ENCODE measurements at regions of chr20 and their contacts with region 1.

Region 1: DNA sequence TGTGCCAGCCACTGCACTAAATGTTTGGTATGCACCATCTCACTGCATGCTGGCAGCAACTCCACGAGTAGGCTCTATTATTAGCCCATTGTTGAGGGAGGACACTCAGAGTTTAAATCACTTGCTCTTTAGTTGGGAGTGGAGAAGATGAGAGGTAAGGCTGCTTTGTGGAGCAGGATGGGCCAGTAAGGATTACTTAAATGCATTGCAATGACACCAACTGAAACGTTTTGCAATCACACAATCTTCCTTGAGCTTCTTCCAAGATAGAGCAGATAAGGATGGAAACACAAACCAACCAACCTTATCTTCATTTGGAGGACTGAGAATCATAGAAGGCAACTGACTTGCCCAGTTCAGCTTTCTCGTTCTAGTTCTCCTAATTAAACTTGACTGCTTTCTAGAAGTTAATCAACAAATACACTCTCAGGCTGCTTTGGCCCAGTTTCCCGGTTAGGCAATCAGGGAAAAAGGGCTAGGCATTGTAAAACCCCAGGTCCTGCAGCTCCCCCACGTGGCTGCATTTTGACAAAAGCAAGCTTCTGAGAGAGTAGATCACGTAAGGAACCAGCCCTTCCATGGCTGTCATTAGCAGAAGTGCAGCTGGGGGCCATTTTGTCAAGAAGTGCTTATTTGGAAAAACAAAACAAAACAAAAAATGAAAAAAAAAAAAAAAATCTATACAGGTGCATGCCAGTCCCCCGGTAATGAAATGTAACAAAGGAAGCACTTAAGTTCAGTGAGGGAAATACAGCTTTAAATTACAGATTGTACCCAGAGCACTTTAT is 130.6 kb downstream of the BCAS1 start:
- DNase-seq: peak; percentile 99
- H3K4me3 Mint-ChIP-seq: peak overlapping the region; percentile 28
- H3K27ac Mint-ChIP-seq: peak overlapping the region; percentile 68
- H3K4me1 Mint-ChIP-seq: peaks cover 78% of the 10 kb centered on the region
- H3K27me3 Mint-ChIP-seq: no peaks in the 10 kb centered on the region
- CTCF ChIP-seq: peak; percentile 92

Region 2: DNA sequence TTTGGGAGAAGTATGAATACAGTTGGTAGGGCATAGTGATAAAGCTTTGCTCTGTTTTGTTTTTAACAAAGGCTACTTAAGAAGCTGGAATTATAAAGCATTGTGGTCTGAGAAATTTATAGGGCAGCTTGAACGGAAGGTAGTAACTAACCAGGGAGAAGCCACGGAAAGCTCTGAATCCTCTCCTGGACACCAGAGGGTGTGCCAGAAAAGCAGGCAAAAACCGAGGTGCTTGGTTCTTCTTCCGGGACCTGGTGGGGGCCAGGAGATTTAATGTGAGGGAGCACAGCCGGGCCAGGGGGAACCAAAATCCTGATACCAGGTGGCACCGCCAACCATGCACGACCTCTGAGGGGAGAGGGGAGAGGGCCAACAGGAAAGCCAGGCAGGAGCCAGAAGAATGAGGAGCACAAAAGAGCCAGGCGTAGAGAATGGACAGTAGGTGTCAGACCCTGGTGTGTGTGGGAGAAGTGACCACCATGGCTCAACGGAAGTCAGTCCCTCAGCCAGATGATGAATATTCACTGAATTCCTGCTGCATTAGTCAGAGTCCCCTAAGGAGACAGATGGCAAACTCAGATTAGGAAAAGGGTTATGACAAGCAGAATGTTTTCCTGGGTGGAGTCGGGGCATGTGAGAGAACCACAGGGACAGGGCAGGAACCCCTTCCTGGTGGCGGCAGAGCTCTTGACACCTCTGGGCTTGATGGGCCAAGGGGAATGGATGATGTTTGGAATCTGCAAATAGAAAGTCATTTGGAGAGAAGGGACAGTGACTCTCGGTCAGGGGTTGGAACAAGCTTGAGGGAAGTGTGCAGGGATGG is 608.4 kb before region 1 on chr20:
- CTCF ChIA-PET with region 1: no interaction called
- intact Hi-C with region 1: loop called (anchors 10 kb)
- DNase-seq: no peak
- H3K4me3 Mint-ChIP-seq: no peak overlapping the region
- H3K27ac Mint-ChIP-seq: peak overlapping the region; percentile 7
- H3K4me1 Mint-ChIP-seq: peaks cover 16% of the 10 kb centered on the region
- H3K27me3 Mint-ChIP-seq: peaks cover 68% of the 10 kb centered on the region
- CTCF ChIP-seq: no peak

Region 3: DNA sequence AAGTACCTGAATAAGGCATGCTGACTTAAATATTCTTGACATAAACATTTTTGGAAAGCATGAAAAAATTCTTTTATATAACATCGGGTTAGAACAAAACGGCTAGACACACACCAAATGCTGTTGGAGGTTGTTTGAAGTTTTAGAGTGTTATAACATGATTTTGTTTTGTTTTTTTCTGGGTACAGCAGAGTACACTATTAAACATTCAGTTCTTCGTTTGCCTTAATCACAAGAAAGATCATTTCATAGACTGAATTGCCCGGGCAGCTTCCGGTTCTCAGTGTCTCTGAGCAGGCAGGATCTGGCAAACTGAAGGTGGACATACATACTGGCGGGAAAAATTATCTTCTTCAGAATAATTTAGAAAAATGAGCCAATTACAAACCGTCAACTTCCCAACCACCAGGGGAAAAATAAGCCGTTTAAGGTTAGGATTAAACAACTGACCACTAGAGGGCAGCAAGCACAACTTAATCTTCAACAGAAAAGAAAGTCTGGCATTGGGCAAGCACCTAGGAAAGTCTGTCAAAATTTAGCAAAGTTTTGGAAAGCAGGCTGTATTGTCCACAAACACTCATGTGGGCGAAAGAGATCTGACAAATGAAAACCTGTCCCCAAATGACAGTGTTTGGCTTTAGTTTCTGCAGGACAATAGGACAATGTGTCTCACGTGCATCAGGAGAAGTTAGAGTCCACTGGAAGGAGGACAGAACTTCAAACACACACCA is 361.1 kb before region 1 on chr20:
- CTCF ChIA-PET with region 1: interaction called, 14 read pairs
- intact Hi-C with region 1: loop called (anchors 1 kb)
- DNase-seq: peak; percentile 81
- H3K4me3 Mint-ChIP-seq: peak overlapping the region; percentile 63
- H3K27ac Mint-ChIP-seq: peak overlapping the region; percentile 80
- H3K4me1 Mint-ChIP-seq: peaks cover 60% of the 10 kb centered on the region
- H3K27me3 Mint-ChIP-seq: no peaks in the 10 kb centered on the region
- CTCF ChIP-seq: peak; percentile 95

Region 4: GRCh38 chr20:53692413-53693067 is 247.2 kb before region 1 on chr20:
- CTCF ChIA-PET with region 1: interaction called, 13 read pairs
- intact Hi-C with region 1: no loop called
- DNase-seq: no peak
- H3K4me3 Mint-ChIP-seq: no peak overlapping the region
- H3K27ac Mint-ChIP-seq: no peak overlapping the region
- H3K4me1 Mint-ChIP-seq: peaks cover 17% of the 10 kb centered on the region
- H3K27me3 Mint-ChIP-seq: no peaks in the 10 kb centered on the region
- CTCF ChIP-seq: no peak

Region 5: GRCh38 chr20:53828682-53829254 is 111.0 kb before region 1 on chr20:
- CTCF ChIA-PET with region 1: interaction called, 6 read pairs
- intact Hi-C with region 1: loop called (anchors 1 kb)
- DNase-seq: peak; percentile 27
- H3K4me3 Mint-ChIP-seq: peak overlapping the region; percentile 64
- H3K27ac Mint-ChIP-seq: peak overlapping the region; percentile 98
- H3K4me1 Mint-ChIP-seq: peaks cover 55% of the 10 kb centered on the region
- H3K27me3 Mint-ChIP-seq: no peaks in the 10 kb centered on the region
- CTCF ChIP-seq: no peak

Region 6: DNA sequence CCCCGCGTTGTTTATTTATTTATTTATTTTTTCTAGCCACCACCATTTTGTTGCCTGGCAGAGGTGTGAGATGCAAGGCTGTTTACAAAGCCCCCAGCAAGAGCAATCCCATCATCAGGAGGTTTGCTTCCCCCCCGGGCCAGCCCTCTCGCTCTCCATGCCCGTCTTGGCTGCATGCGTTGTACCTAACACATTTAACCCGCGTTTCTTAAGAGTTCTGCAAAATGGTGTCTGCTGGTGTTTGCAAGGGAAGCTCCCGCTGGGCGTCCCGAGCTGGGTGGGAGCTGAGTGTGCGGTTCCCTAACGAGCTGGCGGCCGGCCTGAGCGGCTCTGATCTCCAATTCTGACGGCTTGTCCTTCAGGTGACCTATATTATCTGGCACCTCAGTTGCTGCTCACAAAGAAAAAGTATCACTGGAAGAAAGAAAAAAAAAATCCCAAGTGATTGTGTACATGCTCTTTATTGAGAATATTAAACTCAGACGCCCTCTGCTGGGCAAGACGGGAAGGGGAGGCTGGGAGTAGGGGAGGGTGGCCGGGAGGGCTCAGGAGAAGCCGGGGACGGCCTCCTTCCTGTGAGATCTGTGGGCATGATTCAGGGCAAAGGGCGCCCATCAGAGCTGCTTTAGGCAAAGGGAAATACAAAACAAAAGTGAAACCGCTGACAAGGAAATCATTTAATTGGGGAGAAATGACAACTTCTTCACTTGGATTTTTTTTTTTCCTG is 24.2 kb before region 1 on chr20:
- CTCF ChIA-PET with region 1: interaction called, 51 read pairs
- intact Hi-C with region 1: loop called (anchors 1 kb)
- DNase-seq: peak; percentile 99
- H3K4me3 Mint-ChIP-seq: peak overlapping the region; percentile 71
- H3K27ac Mint-ChIP-seq: peak overlapping the region; percentile 90
- H3K4me1 Mint-ChIP-seq: peaks cover 50% of the 10 kb centered on the region
- H3K27me3 Mint-ChIP-seq: no peaks in the 10 kb centered on the region
- CTCF ChIP-seq: peak; percentile 91

Region 7: GRCh38 chr20:53984356-53985149 is 44.8 kb after region 1 on chr20:
- CTCF ChIA-PET with region 1: no interaction called
- intact Hi-C with region 1: no loop called
- DNase-seq: no peak
- H3K4me3 Mint-ChIP-seq: no peak overlapping the region
- H3K27ac Mint-ChIP-seq: no peak overlapping the region
- H3K4me1 Mint-ChIP-seq: no peaks in the 10 kb centered on the region
- H3K27me3 Mint-ChIP-seq: peaks cover 8% of the 10 kb centered on the region
- CTCF ChIP-seq: no peak

Region 8: GRCh38 chr20:54199721-54200176 is 260.0 kb after region 1 on chr20:
- CTCF ChIA-PET with region 1: no interaction called
- intact Hi-C with region 1: loop called (anchors 2 kb)
- DNase-seq: peak; percentile 92
- H3K4me3 Mint-ChIP-seq: no peak overlapping the region
- H3K27ac Mint-ChIP-seq: no peak overlapping the region
- H3K4me1 Mint-ChIP-seq: peaks cover 67% of the 10 kb centered on the region
- H3K27me3 Mint-ChIP-seq: no peaks in the 10 kb centered on the region
- CTCF ChIP-seq: peak; percentile 93

Measured in Calu3 (cell line).